MCF 10A (cell line): ENCODE measurements at regions of chr16 and their contacts with region 1.

Region 1: GRCh38 chr16:67246934-67247697 is at the start of gene FHOD1:
- DNase-seq: peak; percentile 97
- H3K4me3 Mint-ChIP-seq: peak within 1 kb of the TSS; percentile 81
- H3K27ac Mint-ChIP-seq: peak within 1 kb of the TSS; percentile 78
- H3K4me1 Mint-ChIP-seq: peaks cover 41% of the 10 kb centered on the region
- H3K27me3 Mint-ChIP-seq: peaks cover 18% of the 10 kb centered on the region
- CTCF ChIP-seq: no peak
- total RNA-seq, gene FHOD1: 12.1 and 14.7 TPM in 2 replicates

Region 2: GRCh38 chr16:67173808-67174705 is 73.1 kb before region 1 on chr16:
- CTCF ChIA-PET with region 1: interaction called, 3 read pairs
- POLR2A ChIA-PET with region 1: interaction called, 18 read pairs
- intact Hi-C with region 1: no loop called
- DNase-seq: peak; percentile 91
- H3K4me3 Mint-ChIP-seq: peak overlapping the region; percentile 81
- H3K27ac Mint-ChIP-seq: peak overlapping the region; percentile 79
- H3K4me1 Mint-ChIP-seq: peaks cover 61% of the 10 kb centered on the region
- H3K27me3 Mint-ChIP-seq: no peaks in the 10 kb centered on the region
- CTCF ChIP-seq: peak; percentile 8

Region 3: GRCh38 chr16:67191995-67192681 is 55.0 kb before region 1 on chr16 and contains the start of gene E2F4:
- CTCF ChIA-PET with region 1: interaction called, 4 read pairs
- POLR2A ChIA-PET with region 1: interaction called, 28 read pairs
- intact Hi-C with region 1: no loop called
- DNase-seq: peak; percentile 88
- H3K4me3 Mint-ChIP-seq: peak within 1 kb of the TSS; percentile 77
- H3K27ac Mint-ChIP-seq: peak within 1 kb of the TSS; percentile 78
- H3K4me1 Mint-ChIP-seq: peaks cover 22% of the 10 kb centered on the region
- H3K27me3 Mint-ChIP-seq: no peaks in the 10 kb centered on the region
- CTCF ChIP-seq: no peak
- total RNA-seq, gene E2F4: 81.0 and 85.5 TPM in 2 replicates

Region 4: DNA sequence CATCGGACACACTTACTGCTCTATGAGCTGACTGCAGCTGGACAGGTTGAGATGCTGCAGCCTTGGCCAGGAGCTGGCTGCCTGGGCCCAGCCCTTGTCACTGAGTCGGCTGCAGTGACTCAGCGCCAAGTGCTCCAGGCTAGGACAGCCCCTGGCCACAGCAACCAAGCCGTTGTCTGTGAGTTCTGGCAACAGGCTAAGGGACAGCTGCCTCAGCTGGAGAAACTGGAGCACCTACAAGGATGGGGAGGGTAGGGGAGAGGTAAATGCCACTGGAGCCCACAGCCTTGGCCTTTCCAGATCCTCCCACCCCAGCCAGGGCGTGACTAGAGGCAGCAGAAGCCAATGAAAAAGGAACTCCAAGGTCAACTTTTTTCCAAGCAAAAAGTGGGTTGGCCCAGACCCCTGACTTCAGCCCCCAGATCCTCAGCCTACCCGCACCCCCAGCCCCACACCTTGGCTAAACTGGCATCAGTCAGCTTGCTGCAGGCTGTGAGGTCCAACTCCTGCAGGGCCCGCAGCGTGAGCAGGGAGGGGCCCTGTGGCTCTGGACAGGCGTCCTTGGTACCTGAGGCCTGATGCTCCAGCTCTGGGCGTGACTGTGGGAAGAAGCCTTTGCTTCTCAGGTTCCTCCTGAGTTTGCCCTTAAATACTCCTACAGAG is 39.1 kb before region 1 on chr16:
- CTCF ChIA-PET with region 1: interaction called, 6 read pairs
- POLR2A ChIA-PET with region 1: interaction called, 23 read pairs
- intact Hi-C with region 1: no loop called
- DNase-seq: peak; percentile 81
- H3K4me3 Mint-ChIP-seq: peak overlapping the region; percentile 47
- H3K27ac Mint-ChIP-seq: peak overlapping the region; percentile 66
- H3K4me1 Mint-ChIP-seq: peaks cover 32% of the 10 kb centered on the region
- H3K27me3 Mint-ChIP-seq: no peaks in the 10 kb centered on the region
- CTCF ChIP-seq: no peak

Region 5: DNA sequence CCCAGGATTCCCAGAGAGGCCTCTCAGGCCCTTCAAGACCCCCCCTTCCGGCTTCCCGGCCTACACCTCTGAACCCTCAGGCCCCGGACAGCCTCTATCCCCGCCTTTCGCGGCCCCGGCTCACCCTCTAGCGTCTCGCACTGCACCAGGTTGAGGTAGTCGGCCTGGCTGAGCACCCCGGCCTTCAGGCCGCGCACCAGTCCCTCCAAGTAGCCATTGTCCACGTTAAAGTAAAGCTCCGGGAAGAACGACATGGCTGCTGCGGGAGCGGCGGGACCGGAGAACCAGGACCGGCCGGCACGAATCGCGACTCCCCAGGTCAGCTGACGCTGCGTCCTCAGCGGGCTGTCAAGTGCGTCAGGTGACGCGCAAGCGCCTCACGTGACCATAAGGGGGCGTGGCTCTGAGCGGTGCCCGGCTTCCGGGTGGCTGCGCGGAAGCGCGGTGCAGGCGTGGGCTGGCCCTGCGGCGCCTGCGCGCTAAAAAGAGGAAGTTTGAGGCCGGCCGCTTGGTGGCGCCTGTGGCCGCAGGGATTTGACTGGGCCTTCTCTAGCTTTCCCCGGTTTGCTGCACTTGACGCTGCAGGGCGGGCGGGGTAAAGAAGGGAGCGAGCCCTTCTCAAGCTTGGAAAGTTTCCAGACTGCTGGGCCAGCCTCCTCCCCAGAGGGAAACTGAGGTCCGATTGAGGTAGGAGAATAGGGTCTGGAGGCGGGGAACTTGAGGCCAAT is 233.9 kb after region 1 on chr16 and contains the start of gene ATP6V0D1:
- CTCF ChIA-PET with region 1: interaction called, 5 read pairs
- POLR2A ChIA-PET with region 1: interaction called, 13 read pairs
- intact Hi-C with region 1: no loop called
- DNase-seq: peak; percentile 96
- H3K4me3 Mint-ChIP-seq: peak within 1 kb of the TSS; percentile 98
- H3K27ac Mint-ChIP-seq: peak within 1 kb of the TSS; percentile 97
- H3K4me1 Mint-ChIP-seq: peaks cover 22% of the 10 kb centered on the region
- H3K27me3 Mint-ChIP-seq: no peaks in the 10 kb centered on the region
- CTCF ChIP-seq: peak; percentile 79
- total RNA-seq, gene ATP6V0D1: 50.5 and 50.7 TPM in 2 replicates